ENCODE measurements at regions of chr13 and their contacts with region 1.

Region 1: DNA sequence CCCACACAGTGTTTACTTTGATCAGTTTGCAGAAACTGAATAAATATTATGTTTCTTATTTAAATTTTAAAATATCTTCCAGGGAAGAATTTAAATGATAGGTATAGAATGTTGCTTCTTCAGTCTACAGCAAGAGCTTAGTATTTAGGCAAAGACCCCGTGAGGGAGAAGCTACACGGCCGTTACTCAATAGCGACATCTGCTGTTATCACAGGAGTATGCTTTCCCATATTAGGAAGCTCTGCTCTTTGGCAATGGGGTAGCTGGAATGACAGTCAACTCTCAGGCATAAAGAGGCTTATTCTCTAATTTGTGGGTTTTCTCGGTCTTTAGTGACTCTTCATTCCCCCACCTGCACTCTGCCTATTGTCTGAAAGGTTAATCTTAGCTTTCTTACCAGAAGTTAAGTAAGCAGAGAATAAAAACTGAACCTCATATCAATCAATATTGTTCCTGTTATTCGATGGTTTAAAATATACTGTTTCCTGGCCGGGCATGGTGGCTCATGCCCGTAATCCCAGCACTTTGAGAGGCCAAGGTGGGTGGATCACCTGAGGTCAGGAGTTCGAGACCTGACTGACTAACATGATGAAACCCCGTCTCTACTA is 13.2 kb upstream of the LHFPL6 start:
- DNase-seq: no peak
- H3K4me3 ChIP-seq: no peak overlapping the region
- H3K27ac ChIP-seq: no peak overlapping the region
- H3K4me1 ChIP-seq: no peaks in the 10 kb centered on the region
- H3K27me3 ChIP-seq: no peaks in the 10 kb centered on the region
- CTCF ChIP-seq: peak in 2 of 3 experiments; percentile 88 to 93; a peak in 3 of 4 replicates
- EP300 ChIP-seq: no peak
- POLR2A ChIP-seq: no peak
- RAD21 ChIP-seq: peak; percentile 93 to 96

Region 2: GRCh38 chr13:39051157-39051556 is 565.0 kb before region 1 on chr13:
- CTCF ChIA-PET with region 1: interaction called, 11 read pairs
- POLR2A ChIA-PET with region 1: no interaction called
- DNase-seq: no peak
- H3K4me3 ChIP-seq: no peak overlapping the region
- H3K27ac ChIP-seq: no peak overlapping the region
- H3K4me1 ChIP-seq: peaks cover 0 to 6% (median 1%) of the 10 kb centered on the region in 4 experiments; a peak in 2 of 7 replicates
- H3K27me3 ChIP-seq: peaks cover 0 to 1% (median 0%) of the 10 kb centered on the region in 4 experiments; a peak in 1 of 7 replicates
- CTCF ChIP-seq: peak in 1 of 3 experiments; percentile 51; a peak in 2 of 4 replicates
- EP300 ChIP-seq: no peak
- POLR2A ChIP-seq: no peak
- RAD21 ChIP-seq: peak; percentile 62 to 68

Region 3: GRCh38 chr13:39263033-39263432 is 353.2 kb before region 1 on chr13:
- CTCF ChIA-PET with region 1: interaction called, 16 read pairs
- POLR2A ChIA-PET with region 1: no interaction called
- DNase-seq: peak in 1 of 2 experiments; percentile 67
- H3K4me3 ChIP-seq: no peak overlapping the region
- H3K27ac ChIP-seq: no peak overlapping the region
- H3K4me1 ChIP-seq: no peaks in the 10 kb centered on the region
- H3K27me3 ChIP-seq: no peaks in the 10 kb centered on the region
- CTCF ChIP-seq: peak in 2 of 3 experiments; percentile 71 to 84; a peak in 3 of 4 replicates
- EP300 ChIP-seq: no peak
- POLR2A ChIP-seq: no peak
- RAD21 ChIP-seq: peak; percentile 80 to 81

Region 4: GRCh38 chr13:39284801-39285388 is 331.3 kb before region 1 on chr13:
- CTCF ChIA-PET with region 1: interaction called, 16 read pairs
- POLR2A ChIA-PET with region 1: no interaction called
- DNase-seq: no peak
- H3K4me3 ChIP-seq: no peak overlapping the region
- H3K27ac ChIP-seq: no peak overlapping the region
- H3K4me1 ChIP-seq: no peaks in the 10 kb centered on the region
- H3K27me3 ChIP-seq: no peaks in the 10 kb centered on the region
- CTCF ChIP-seq: peak; percentile 54 to 75 (median 60)
- EP300 ChIP-seq: no peak
- POLR2A ChIP-seq: no peak
- RAD21 ChIP-seq: peak; percentile 68 to 78

Region 5: DNA sequence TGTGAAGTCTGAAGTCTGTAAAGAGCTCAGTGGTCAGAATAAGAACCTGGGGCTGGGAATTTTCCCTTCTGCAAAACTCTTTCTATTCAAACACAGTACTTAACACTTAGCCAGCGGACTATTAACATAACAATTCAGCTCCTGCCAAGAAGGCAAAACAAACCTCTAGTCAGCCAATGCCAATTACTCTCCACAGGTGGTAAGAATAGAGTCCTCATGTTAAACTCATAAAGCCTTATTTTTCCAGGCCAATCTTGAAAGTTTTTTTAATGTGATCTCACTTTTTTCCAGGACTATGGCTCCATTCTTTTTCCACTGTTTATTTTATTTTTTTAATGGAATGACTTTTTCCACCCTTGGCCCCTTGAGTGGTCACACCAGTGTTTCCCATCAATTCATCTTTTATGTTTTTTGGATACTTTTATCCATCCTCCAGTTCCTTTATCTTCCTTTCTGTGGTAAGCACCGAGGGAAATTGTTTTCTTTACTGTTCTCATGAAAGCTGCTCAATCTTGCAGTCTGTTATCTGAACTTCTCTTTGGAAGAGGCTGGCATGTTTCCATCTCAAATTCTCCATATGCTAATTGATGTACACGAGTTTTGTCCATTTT is 230.5 kb before region 1 on chr13:
- CTCF ChIA-PET with region 1: interaction called, 11 read pairs
- POLR2A ChIA-PET with region 1: interaction called, 3 read pairs
- DNase-seq: peak in 1 of 2 experiments; percentile 54
- H3K4me3 ChIP-seq: no peak overlapping the region
- H3K27ac ChIP-seq: no peak overlapping the region
- H3K4me1 ChIP-seq: peaks cover 0 to 4% (median 3%) of the 10 kb centered on the region in 4 experiments; a peak in 5 of 7 replicates
- H3K27me3 ChIP-seq: peaks cover 71 to 95% (median 93%) of the 10 kb centered on the region in 4 experiments
- CTCF ChIP-seq: no peak
- EP300 ChIP-seq: peak in 1 of 2 experiments; percentile 81; a peak in 1 of 3 replicates
- POLR2A ChIP-seq: no peak
- RAD21 ChIP-seq: no peak; a peak in 1 of 4 replicates

Region 6: DNA sequence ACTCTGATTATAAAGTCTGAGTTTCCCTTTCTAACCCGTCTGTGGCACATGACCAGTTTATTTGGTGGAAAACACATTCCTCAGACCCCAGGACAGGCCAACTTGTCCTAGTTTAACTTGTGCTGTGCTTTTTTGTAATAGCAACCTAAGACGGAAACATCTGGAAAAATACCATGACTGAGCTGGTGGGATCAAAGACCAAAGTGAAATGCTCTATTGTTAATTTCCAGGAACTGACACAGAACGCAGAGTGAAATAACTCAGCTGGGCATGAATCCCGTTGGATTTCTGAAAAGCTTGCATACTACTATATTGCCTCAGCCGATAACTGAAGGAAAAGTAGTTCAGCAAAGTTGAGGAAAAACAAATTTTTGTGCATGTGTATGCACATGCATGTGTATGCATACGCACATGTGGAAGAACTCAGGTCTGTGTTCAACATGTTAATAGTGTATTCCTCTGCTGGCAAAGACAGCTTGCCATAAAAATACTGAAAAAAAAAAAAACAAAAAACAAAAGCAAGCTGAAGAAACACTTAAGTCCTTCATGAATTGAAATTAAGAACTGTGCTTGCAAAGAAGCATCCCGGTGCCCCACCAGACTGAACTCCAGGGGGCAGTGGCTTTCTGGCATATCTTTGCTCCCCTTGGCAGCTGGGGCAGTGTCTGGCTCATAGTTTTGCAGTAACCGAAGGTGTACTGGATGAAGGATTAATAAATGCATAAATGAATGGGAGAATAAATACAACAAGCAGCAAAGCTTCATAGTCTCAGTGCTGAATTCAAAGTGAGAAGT is 201.0 kb before region 1 on chr13:
- CTCF ChIA-PET with region 1: interaction called, 76 read pairs
- POLR2A ChIA-PET with region 1: interaction called, 4 read pairs
- DNase-seq: no peak
- H3K4me3 ChIP-seq: no peak overlapping the region
- H3K27ac ChIP-seq: no peak overlapping the region
- H3K4me1 ChIP-seq: peaks cover 3 to 26% (median 19%) of the 10 kb centered on the region in 4 experiments; a peak in 6 of 7 replicates
- H3K27me3 ChIP-seq: no peaks in the 10 kb centered on the region
- CTCF ChIP-seq: peak; percentile 67 to 74 (median 72)
- EP300 ChIP-seq: no peak
- POLR2A ChIP-seq: no peak
- RAD21 ChIP-seq: peak; percentile 74 to 87

Region 7: DNA sequence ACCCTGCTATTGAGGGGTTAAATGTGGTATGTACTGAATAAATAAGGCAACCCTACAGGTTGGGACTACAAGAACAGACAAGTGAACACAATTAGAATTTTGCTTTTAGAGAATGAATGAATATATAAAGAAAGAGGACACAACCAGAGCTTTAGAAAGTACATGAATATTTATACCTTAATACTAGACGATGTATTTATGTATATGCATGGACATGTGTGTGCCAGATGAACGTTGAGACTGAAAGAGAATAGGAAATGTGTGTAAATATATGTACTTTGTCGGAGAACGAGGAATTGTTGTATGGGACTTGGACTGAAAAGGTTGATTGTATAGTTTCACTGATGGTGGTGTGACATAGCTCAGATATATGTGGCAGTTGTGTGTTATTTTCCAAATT is 29.9 kb after region 1 on chr13:
- CTCF ChIA-PET with region 1: interaction called, 12 read pairs
- POLR2A ChIA-PET with region 1: no interaction called
- DNase-seq: no peak
- H3K4me3 ChIP-seq: no peak overlapping the region
- H3K27ac ChIP-seq: no peak overlapping the region
- H3K4me1 ChIP-seq: no peaks in the 10 kb centered on the region
- H3K27me3 ChIP-seq: no peaks in the 10 kb centered on the region
- CTCF ChIP-seq: no peak
- EP300 ChIP-seq: no peak
- POLR2A ChIP-seq: no peak
- RAD21 ChIP-seq: no peak

Region 8: GRCh38 chr13:39699274-39699673 is 83.1 kb after region 1 on chr13:
- CTCF ChIA-PET with region 1: no interaction called
- POLR2A ChIA-PET with region 1: no interaction called
- DNase-seq: no peak
- H3K4me3 ChIP-seq: no peak overlapping the region
- H3K27ac ChIP-seq: no peak overlapping the region
- H3K4me1 ChIP-seq: no peaks in the 10 kb centered on the region
- H3K27me3 ChIP-seq: no peaks in the 10 kb centered on the region
- CTCF ChIP-seq: no peak
- EP300 ChIP-seq: no peak
- POLR2A ChIP-seq: no peak
- RAD21 ChIP-seq: no peak

Measured in H1 (cell line).